Left ventricle myocardium superior (tissue), 1 donor: ENCODE measurements at regions of chr16 and their contacts with region 1.

Region 1: DNA sequence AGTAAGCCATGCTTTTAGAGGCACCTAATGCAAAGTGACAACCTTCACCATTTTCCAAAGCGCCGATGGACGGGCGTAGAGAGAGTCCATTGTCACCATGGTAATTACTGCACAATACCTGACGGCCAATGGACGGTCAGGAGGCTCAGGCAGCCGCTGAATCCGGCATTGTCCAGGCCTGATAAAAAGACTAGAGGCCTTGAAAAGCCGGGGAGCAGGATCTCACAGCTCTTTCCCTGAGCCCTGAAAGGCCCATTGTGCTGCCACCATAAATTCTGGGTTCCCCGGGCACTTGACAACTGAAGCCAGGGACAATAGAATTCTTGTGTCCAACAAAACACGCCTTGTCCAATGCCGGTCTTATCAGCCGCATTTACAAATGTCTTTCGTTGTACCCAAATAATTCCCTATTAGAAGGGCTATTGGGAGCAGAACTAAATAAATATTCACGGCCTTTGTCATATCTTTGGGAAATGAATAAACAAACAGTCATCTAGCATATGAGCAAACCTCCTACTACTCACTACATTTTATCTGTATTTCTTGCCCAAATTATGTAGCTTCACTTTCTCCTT is 62.4 kb downstream of the CDH11 start:
- DNase-seq: no peak
- ATAC-seq: no peak

Region 2: GRCh38 chr16:64711026-64711425 is 348.5 kb before region 1 on chr16:
- intact Hi-C with region 1: no loop called
- DNase-seq: no peak
- ATAC-seq: no peak

Region 3: DNA sequence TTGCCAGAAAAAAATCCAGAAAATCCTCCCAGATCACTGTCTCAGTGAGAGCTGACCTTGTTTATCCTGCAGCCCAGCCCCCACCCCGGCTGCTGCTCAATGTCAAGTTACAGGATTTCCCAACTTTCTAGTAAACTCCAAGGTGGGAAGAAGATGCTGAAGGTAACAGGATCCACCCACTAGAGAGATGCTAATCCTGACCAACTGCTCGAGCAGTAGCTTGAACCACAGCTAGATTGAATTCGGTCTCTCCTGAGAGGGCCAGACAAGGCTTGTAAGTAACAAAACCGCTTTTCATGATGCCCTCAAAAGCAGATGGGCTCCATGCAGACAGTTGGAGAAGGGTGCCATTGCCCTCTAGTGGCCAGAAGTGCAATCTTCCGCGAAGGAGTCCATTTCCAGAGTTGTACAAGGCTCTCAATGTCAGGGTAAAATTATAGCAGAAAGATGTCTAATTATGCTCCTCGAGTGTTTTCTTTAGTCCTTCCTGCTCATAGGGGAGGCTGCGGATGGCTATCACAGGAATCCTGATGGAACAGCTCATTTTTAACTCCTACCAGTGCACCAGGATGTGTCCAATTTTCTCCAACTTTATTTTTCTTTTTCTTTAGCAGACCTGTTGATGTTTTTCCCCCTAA is 58.4 kb after region 1 on chr16:
- intact Hi-C with region 1: loop called (anchors 2 kb)
- DNase-seq: peak; percentile 62
- ATAC-seq: peak; percentile 61